ENCODE measurements at regions of chr6 and their contacts with region 1.

Region 1: GRCh38 chr6:135094403-135094848 is 39.8 kb upstream of the HBS1L start:
- DNase-seq: no peak
- H3K4me3 ChIP-seq: no peak overlapping the region
- H3K27ac ChIP-seq: no peak overlapping the region
- H3K4me1 ChIP-seq: no peaks in the 10 kb centered on the region
- H3K27me3 ChIP-seq: no peaks in the 10 kb centered on the region
- CTCF ChIP-seq: no peak

Region 2: DNA sequence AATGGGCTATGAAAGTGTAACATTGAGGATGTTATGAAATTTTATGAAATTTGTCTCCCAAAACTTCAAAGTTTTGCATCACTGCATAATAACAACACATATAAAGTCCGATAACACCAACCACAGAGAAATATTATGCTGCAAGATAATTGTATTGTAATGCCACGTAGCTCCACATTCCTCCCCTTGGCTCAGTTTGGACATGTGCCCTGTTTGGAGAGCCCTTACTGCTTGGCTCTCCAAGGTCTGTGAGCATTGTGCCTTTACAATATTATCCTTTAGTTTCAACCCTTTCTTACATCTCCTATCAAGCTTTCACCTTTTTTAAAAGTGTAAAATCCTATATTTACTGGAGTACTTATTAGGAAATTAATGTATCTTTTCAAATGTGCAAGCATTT is 50.6 kb before region 1 on chr6:
- CTCF ChIA-PET with region 1: no interaction called
- POLR2A ChIA-PET with region 1: interaction called, 12 read pairs
- intact Hi-C with region 1: no loop called
- DNase-seq: no peak
- H3K4me3 ChIP-seq: no peak overlapping the region
- H3K27ac ChIP-seq: no peak overlapping the region
- H3K4me1 ChIP-seq: peaks cover 6% of the 10 kb centered on the region
- H3K27me3 ChIP-seq: no peaks in the 10 kb centered on the region
- CTCF ChIP-seq: no peak

Measured in A673 (cell line).